Gastrocnemius medialis (tissue), 4 donors: ENCODE measurements at regions of chr12 and their contacts with region 1.

Region 1: DNA sequence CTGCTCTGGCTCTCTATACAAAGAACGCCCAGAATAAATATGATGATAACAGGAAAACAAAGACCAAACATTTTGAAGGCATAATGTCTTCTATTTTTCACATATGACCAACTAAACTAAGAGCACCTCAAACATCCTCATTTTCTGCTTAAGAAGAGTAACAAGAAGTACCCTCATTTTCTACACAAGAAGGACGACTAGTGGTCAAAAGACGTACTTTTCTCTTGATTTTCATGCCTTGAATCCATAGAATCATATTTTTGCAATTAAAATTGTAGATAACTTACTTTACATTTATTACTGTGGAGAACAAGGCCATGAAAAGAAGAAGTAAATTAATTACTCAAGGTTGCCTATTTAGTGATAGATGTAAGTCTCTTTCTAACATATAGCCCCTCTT is 358.6 kb downstream of the DUSP6 start:
- DNase-seq: no peak
- ATAC-seq: peak; percentile 44 to 60
- H3K4me3 ChIP-seq: no peak overlapping the region
- H3K27ac ChIP-seq: no peak overlapping the region
- H3K4me1 ChIP-seq: no peaks in the 10 kb centered on the region
- H3K27me3 ChIP-seq: no peaks in the 10 kb centered on the region
- CTCF ChIP-seq: peak in 4 of 5 experiments; percentile 45 to 62 (median 60)
- POLR2A ChIP-seq: no peak

Region 2: GRCh38 chr12:88111074-88111652 is 882.5 kb before region 1 on chr12:
- in situ Hi-C with region 1: loop called in 1 of 4 experiments (anchors 25 kb)
- intact Hi-C with region 1: loop called (anchors 10 kb)
- DNase-seq: no peak
- ATAC-seq: no peak
- H3K4me3 ChIP-seq: peak overlapping the region in 2 of 4 donors; percentile 14 to 29
- H3K27ac ChIP-seq: no peak overlapping the region
- H3K4me1 ChIP-seq: no peaks in the 10 kb centered on the region
- H3K27me3 ChIP-seq: no peaks in the 10 kb centered on the region
- CTCF ChIP-seq: peak in 3 of 5 experiments; percentile 16 to 37 (median 35)
- POLR2A ChIP-seq: no peak

Region 3: DNA sequence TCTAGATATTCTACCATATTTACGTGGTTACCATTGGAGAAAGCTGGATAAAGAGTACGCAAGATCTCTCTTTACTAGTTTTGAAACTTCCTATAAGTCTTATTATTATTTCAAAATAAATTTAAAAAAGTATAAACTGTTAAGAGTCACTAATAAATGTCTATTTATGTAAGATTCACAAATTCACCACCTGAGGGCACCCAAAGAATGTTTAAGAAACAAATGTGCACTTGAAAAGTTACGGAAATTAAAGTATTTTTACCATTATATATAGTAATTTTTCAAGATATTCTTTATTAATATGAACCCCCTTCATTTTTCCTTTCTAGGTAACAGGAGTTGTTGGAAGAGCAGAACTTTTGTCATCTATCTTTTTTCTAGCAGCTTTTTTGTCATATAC is 839.7 kb before region 1 on chr12:
- in situ Hi-C with region 1: loop called in 2 of 4 experiments (anchors 25 kb)
- intact Hi-C with region 1: no loop called
- DNase-seq: no peak
- ATAC-seq: no peak
- H3K4me3 ChIP-seq: no peak overlapping the region
- H3K27ac ChIP-seq: no peak overlapping the region
- H3K4me1 ChIP-seq: no peaks in the 10 kb centered on the region
- H3K27me3 ChIP-seq: no peaks in the 10 kb centered on the region
- CTCF ChIP-seq: no peak
- POLR2A ChIP-seq: no peak

Region 4: DNA sequence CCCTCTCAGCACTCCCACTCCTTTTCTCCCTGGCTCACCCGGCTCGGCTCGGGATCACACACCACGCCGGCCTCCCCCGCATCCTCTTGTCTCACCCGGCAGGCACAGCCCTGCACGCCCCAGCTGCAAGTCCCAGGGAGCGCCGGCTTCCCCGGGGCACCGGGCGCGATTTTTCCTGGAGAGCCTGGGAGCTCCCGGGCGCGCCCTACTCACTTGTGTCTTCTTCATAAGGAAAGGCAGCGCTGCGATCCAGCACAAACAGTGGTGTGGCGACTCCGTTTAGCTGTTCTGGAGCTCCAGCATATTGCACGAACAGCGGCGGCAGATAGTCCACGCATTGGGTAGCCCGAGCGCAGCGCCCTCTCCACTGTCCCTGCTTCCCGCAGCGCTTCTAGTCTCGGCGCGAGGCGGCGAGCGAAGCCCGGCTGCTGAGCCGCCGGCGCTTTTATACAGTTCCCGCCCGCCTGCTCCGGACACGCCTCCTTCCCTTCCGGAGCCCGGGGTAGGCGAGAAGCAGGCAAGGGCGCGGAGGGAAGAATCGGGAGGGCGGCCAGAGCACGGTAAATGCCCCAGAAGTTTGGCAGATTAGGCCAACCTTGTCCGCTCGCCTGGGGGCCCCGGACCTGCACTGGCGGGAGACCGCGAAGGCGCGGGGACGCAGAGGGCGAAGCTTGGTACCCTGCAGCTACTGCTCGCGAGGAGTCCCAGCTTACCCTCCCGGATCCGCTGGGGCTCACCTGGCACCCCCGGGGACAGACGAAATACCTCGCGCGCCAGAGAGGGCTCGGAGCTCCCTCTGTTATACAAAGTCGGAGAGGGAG is 413.4 kb before region 1 on chr12 and contains the start of gene KITLG:
- in situ Hi-C with region 1: loop called in 1 of 4 experiments (anchors 25 kb)
- intact Hi-C with region 1: loop called (anchors 10 kb)
- DNase-seq: peak; percentile 48 to 58
- ATAC-seq: peak; percentile 79 to 83
- H3K4me3 ChIP-seq: peak within 1 kb of the TSS; percentile 67 to 88 (median 79)
- H3K27ac ChIP-seq: peak within 1 kb of the TSS; percentile 56 to 76 (median 64)
- H3K4me1 ChIP-seq: peaks cover 8 to 20% of the 10 kb centered on the region in 2 donors
- H3K27me3 ChIP-seq: no peaks in the 10 kb centered on the region
- CTCF ChIP-seq: peak in 3 of 5 experiments; percentile 31 to 36 (median 34)
- POLR2A ChIP-seq: peak; percentile 47 to 67
- total RNA-seq, gene KITLG: 3.9 to 7.1 (median 4.6) TPM

Region 5: DNA sequence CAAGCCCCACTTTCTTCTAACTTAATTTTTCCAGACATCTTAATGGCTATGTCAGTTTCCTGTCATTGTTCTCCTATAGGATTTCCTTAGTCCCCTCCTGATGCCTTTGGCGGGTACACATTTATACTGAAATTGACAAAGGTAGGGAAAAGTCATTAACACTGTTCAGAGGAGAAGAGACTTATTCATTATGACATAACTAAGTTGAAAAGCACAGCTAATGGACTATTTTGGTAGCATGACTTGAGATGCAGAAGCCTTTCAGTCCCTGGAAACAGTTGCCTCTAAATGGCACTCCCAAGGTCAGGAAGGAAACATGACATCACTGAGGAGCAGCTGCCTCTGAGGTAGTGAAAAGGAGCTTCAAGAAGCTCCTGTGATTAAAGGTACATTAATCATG is 95.9 kb before region 1 on chr12:
- in situ Hi-C with region 1: no loop called
- intact Hi-C with region 1: loop called (anchors 10 kb)
- DNase-seq: peak; percentile 18 to 37
- ATAC-seq: peak; percentile 97 to 98
- H3K4me3 ChIP-seq: no peak overlapping the region
- H3K27ac ChIP-seq: peak overlapping the region; percentile 2 to 65 (median 26)
- H3K4me1 ChIP-seq: peaks cover 15 to 31% of the 10 kb centered on the region in 2 donors
- H3K27me3 ChIP-seq: no peaks in the 10 kb centered on the region
- CTCF ChIP-seq: no peak
- POLR2A ChIP-seq: no peak